CD4-positive, alpha-beta memory T cell (primary cell): ENCODE measurements at regions of chr6 and their contacts with region 1.

Region 1: GRCh38 chr6:142819603-142820337 is 125.2 kb downstream of the HIVEP2 start:
- DNase-seq: peak; percentile 45 to 84 (median 52)
- H3K4me3 ChIP-seq: peak overlapping the region; percentile 37 to 48
- H3K4me3 Mint-ChIP-seq: peak overlapping the region; percentile 76 to 92 (median 90)
- H3K27ac ChIP-seq: peak overlapping the region; percentile 76
- H3K27ac Mint-ChIP-seq: peak overlapping the region; percentile 87 to 100 (median 94)
- H3K4me1 ChIP-seq: peaks cover 88% of the 10 kb centered on the region
- H3K4me1 Mint-ChIP-seq: peaks cover 62 to 84% (median 71%) of the 10 kb centered on the region in 4 donors
- H3K27me3 ChIP-seq: no peaks in the 10 kb centered on the region
- H3K27me3 Mint-ChIP-seq: peaks cover 0 to 3% of the 10 kb centered on the region in 2 donors

Region 2: GRCh38 chr6:142803032-142803431 is 16.7 kb before region 1 on chr6:
- CTCF ChIA-PET with region 1: interaction called, 4 read pairs
- POLR2A ChIA-PET with region 1: interaction called, 16 read pairs
- intact Hi-C with region 1: no loop called
- DNase-seq: no peak
- H3K4me3 ChIP-seq: no peak overlapping the region
- H3K4me3 Mint-ChIP-seq: no peak overlapping the region
- H3K27ac ChIP-seq: no peak overlapping the region
- H3K27ac Mint-ChIP-seq: peak overlapping the region in 5 of 7 donors; percentile 10 to 86 (median 47)
- H3K4me1 ChIP-seq: peaks cover 100% of the 10 kb centered on the region
- H3K4me1 Mint-ChIP-seq: peaks cover 73 to 99% (median 89%) of the 10 kb centered on the region in 4 donors
- H3K27me3 ChIP-seq: no peaks in the 10 kb centered on the region
- H3K27me3 Mint-ChIP-seq: no peaks in the 10 kb centered on the region

Region 3: GRCh38 chr6:142838821-142839685 is 19.3 kb after region 1 on chr6:
- CTCF ChIA-PET with region 1: interaction called, 16 read pairs
- POLR2A ChIA-PET with region 1: interaction called, 50 read pairs
- intact Hi-C with region 1: loop called (anchors 1 kb)
- DNase-seq: no peak
- H3K4me3 ChIP-seq: no peak overlapping the region
- H3K4me3 Mint-ChIP-seq: peak overlapping the region; percentile 69 to 90 (median 76)
- H3K27ac ChIP-seq: peak overlapping the region; percentile 25
- H3K27ac Mint-ChIP-seq: peak overlapping the region; percentile 77 to 94 (median 88)
- H3K4me1 ChIP-seq: peaks cover 84% of the 10 kb centered on the region
- H3K4me1 Mint-ChIP-seq: peaks cover 59 to 85% (median 72%) of the 10 kb centered on the region in 4 donors
- H3K27me3 ChIP-seq: no peaks in the 10 kb centered on the region
- H3K27me3 Mint-ChIP-seq: no peaks in the 10 kb centered on the region

Region 4: DNA sequence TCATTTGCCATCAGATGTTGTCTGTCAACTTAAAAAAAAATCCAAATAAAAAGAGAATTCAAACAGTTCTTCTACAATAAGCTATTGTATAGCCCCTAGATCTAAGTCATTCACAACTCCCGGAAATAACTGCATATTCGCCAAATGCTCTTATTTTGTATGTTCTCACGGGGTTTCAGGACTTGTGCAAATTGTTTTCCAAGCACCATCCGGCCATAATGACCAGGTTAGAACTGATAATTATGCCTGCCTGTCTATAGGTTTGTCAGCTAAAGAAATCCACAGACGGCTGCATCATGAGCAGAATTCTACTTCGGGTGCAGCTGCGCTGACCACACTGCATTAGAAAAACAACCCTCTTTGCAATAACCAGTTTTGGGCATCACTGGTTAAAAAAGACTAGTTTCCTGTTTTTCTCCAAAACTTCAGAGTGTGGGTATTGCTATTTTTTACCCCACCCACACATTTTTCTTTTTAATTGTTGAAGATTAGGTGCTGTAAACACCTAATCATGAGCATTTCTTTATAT is 37.5 kb after region 1 on chr6:
- CTCF ChIA-PET with region 1: interaction called, 8 read pairs
- POLR2A ChIA-PET with region 1: interaction called, 27 read pairs
- intact Hi-C with region 1: loop called (anchors 5 kb)
- DNase-seq: peak; percentile 55 to 66 (median 61)
- H3K4me3 ChIP-seq: peak overlapping the region; percentile 32 to 51
- H3K4me3 Mint-ChIP-seq: peak overlapping the region; percentile 81 to 94 (median 86)
- H3K27ac ChIP-seq: peak overlapping the region; percentile 81
- H3K27ac Mint-ChIP-seq: peak overlapping the region; percentile 91 to 98 (median 95)
- H3K4me1 ChIP-seq: peaks cover 96% of the 10 kb centered on the region
- H3K4me1 Mint-ChIP-seq: peaks cover 75 to 95% (median 86%) of the 10 kb centered on the region in 4 donors
- H3K27me3 ChIP-seq: no peaks in the 10 kb centered on the region
- H3K27me3 Mint-ChIP-seq: no peaks in the 10 kb centered on the region

Region 5: DNA sequence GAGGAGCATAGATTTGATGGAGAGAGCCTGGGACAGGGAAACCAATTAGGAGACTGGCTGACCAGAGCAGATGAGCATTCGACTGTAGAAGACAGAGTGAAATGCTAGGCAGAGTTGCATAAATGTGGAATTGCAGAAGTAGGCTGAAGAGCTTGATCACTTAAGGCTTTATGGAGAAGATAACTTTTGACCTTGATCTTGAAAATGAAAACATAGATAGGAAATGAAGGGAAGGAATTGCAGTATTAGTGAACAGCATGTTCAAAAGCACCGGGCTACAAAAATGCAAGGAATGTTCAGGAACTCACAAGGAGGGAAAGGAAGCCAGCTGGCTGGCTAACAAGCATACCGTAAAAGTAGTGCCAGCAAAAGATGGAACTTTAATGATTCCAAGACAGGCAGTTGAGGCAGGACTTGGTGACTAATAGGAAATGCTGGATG is 1002.8 kb after region 1 on chr6:
- CTCF ChIA-PET with region 1: no interaction called
- POLR2A ChIA-PET with region 1: no interaction called
- intact Hi-C with region 1: no loop called
- DNase-seq: no peak
- H3K4me3 ChIP-seq: no peak overlapping the region
- H3K4me3 Mint-ChIP-seq: no peak overlapping the region
- H3K27ac ChIP-seq: no peak overlapping the region
- H3K27ac Mint-ChIP-seq: peak overlapping the region in 1 of 7 donors; percentile 9
- H3K4me1 ChIP-seq: no peaks in the 10 kb centered on the region
- H3K4me1 Mint-ChIP-seq: peaks cover 0 to 1% (median under 1%) of the 10 kb centered on the region in 4 donors
- H3K27me3 ChIP-seq: no peaks in the 10 kb centered on the region
- H3K27me3 Mint-ChIP-seq: no peaks in the 10 kb centered on the region